Heart right ventricle (tissue), 16 donors: ENCODE measurements at regions of chr1 and their contacts with region 1.

Region 1: DNA sequence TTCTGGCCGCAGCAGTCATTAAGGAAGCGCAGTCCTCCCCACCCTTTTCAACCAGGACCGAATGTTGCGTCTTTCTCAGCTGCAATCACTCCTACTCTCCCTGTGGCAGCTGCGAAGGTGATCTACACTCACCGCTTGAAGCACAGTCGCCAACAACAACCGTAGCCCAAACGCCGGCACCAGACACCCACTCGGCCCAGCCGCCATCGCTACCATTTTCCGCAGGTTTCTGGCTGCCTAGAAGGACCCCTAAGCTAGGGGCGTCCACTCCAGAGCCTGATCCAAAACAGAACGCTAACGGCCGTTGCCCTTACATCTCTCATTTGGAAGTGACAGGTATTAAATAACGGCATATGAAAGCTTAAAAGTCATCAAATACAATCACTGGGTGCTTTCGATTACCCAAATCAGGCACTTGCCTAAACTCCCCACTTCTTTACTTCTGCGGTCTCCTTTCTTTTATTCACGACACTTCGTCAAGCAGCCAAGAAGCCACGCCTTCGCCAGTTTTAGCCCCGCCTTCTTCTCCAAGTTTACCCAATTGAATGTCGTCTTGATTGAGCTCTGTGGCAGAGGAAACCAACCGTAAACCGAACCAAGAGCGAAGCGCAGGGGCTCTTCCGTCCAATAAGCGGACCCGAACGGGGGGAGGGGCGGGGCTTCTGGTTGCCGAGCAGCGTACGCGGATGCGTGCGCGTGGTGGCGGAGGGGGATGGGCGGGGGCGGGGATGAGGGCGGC is at the start of gene SELENOF:
- DNase-seq: peak; percentile 99 to 100
- ATAC-seq: peak; percentile 96 to 98 (median 98)
- H3K4me3 ChIP-seq: peak within 1 kb of the TSS; percentile 67 to 94 (median 91)
- H3K27ac ChIP-seq: peak within 1 kb of the TSS; percentile 80 to 97 (median 92)
- H3K4me1 ChIP-seq: peaks cover 0 to 42% (median 32%) of the 10 kb centered on the region in 9 donors
- H3K27me3 ChIP-seq: no peaks in the 10 kb centered on the region
- CTCF ChIP-seq: no peak
- total RNA-seq, gene SELENOF: 58.0 to 104 (median 73.4) TPM

Region 2: DNA sequence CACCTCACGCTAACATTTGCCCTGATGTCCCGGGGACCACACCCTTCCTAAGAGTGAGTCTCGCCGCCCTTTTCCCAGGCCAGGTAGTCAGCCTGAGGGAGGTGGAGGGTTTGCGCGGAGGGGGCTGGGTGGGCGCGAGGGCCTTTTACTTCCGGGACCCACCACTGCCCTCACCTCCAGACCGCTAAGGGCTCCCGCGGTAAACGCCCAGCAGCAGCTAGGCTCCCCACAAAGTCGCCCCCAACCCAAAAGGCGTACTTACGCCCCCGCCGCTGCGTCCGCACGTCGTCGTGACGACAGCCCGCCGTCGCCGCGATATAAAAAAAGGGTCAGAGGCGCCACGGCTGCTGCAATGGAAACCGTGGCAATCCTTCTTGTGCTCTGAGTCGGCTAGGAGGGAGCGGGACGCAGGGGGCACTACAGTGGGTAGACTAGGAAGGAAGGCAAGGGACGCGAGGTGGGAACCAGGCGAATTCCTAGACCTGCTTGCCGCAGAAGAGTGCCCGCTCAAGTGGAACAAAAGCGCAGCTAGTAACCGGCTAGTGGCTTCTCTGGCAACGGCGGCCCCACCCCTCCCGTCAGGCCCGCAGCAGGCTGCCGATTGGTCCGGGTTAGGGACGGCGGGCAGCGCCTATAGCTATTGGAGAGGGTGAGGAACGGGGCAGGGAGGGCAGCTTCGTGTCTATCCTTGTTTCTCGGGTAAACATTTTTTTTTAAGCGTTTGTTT is 518.1 kb before region 1 on chr1 and contains the start of gene ODF2L:
- intact Hi-C with region 1: loop called in 1 of 10 experiments (anchors 10 kb)
- DNase-seq: peak; percentile 88 to 89
- ATAC-seq: peak; percentile 99 to 100 (median 100)
- H3K4me3 ChIP-seq: peak within 1 kb of the TSS; percentile 50 to 100 (median 90)
- H3K27ac ChIP-seq: peak within 1 kb of the TSS in 9 of 10 donors; percentile 54 to 90 (median 82)
- H3K4me1 ChIP-seq: peaks cover 0 to 33% (median 16%) of the 10 kb centered on the region in 9 donors
- H3K27me3 ChIP-seq: no peaks in the 10 kb centered on the region
- CTCF ChIP-seq: peak in 1 of 9 donors; percentile 12
- total RNA-seq, gene ODF2L: 6.2 to 15.2 (median 8.4) TPM

Region 3: GRCh38 chr1:86714159-86714558 is 199.9 kb before region 1 on chr1:
- intact Hi-C with region 1: loop called in 4 of 10 experiments (anchors 10 kb)
- DNase-seq: no peak
- ATAC-seq: peak; percentile 29 to 90 (median 82)
- H3K4me3 ChIP-seq: no peak overlapping the region
- H3K27ac ChIP-seq: peak overlapping the region in 7 of 10 donors; percentile 49 to 75 (median 64)
- H3K4me1 ChIP-seq: peaks cover 0 to 100% (median 79%) of the 10 kb centered on the region in 9 donors
- H3K27me3 ChIP-seq: no peaks in the 10 kb centered on the region
- CTCF ChIP-seq: no peak

Region 4: DNA sequence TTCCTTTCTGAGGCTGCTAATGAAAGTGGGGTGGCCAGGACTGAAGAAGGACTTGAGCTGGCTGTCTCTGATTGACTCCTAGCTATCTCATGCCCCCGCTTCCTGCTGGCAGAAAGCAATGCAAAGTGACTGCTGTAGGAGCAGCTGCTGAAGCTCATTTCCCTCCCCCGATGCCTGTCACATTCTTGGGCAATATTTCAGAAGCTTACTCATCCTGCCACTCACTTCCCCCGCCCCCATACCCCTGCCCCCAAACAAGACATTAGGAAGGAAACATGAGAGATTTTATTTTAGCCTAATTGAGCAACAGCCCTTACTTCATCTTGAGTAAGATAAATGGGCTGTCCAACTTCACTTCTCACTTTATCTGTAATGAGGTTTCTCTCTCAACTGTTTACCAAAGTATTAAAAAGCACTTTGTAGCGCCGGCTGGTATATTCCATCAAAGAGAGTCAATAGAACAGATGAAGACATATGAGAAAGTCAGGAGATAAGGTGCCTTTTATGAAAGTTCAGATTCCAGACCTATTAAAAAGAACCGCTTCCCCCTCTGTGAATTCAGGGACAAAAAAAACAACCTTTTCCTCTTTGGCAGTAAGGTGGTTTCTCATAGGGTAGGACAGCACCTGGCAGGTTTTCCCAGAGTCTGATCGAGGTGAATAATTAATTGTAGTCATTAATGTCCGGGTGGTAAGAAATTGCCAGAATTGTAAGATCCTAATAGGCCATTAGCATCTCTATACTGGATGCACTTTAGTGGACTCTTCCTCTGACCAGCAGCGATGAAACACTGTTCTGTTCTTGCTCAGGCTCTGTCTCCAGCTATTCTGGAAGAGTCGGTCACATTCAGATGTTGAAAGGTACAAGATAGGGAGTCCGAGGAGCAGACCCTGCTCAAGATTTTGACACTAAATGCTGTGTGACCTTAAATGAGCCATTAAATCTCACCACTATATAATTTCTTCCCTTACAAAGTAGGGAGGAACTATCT is 139.5 kb before region 1 on chr1:
- intact Hi-C with region 1: no loop called
- DNase-seq: peak; percentile 29 to 71
- ATAC-seq: peak; percentile 89 to 97 (median 94)
- H3K4me3 ChIP-seq: peak overlapping the region in 1 of 10 donors; percentile 30
- H3K27ac ChIP-seq: peak overlapping the region in 8 of 10 donors; percentile 25 to 88 (median 66)
- H3K4me1 ChIP-seq: peaks cover 0 to 52% (median 21%) of the 10 kb centered on the region in 9 donors
- H3K27me3 ChIP-seq: no peaks in the 10 kb centered on the region
- CTCF ChIP-seq: no peak

Region 5: GRCh38 chr1:86965012-86965826 is 51.2 kb after region 1 on chr1:
- intact Hi-C with region 1: loop called in 1 of 10 experiments (anchors 5 kb)
- DNase-seq: peak in 1 of 2 donors; percentile 19
- ATAC-seq: peak in 2 of 8 donors; percentile 14 to 65
- H3K4me3 ChIP-seq: no peak overlapping the region
- H3K27ac ChIP-seq: no peak overlapping the region
- H3K4me1 ChIP-seq: peaks cover 0 to 3% (median 0%) of the 10 kb centered on the region in 9 donors
- H3K27me3 ChIP-seq: no peaks in the 10 kb centered on the region
- CTCF ChIP-seq: peak; percentile 24 to 74 (median 62)